Activated CD4-positive, alpha-beta T cell treated with anti-CD3 and anti-CD28 coated beads for 36 hours (primary cell): ENCODE measurements at regions of chr7 and their contacts with region 1.

Region 1: DNA sequence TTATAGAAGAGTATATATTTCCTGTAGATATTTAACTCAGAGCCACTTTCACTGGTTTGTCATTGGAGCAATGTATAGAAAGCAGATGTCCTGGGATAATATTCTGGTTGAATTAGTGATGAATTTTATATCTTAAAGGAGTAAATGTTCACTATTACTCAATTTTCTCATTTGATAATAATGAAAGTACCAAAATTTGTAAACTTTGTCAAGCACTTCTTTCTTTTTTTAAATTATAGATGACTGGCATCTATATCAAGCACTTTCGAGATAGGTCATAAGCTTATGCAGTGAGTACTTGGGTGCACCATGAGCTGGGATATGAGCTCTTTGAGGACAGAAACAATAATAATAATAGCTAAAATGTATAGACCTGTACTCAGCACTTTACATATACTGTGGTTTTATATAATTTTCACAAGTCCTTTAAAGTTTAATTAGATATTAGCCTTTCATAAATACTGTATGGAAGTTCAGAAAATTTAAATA is 11.3 kb downstream of the RSBN1L start:
- DNase-seq: no peak
- ATAC-seq: peak; percentile 84
- H3K4me3 Mint-ChIP-seq: no peak overlapping the region
- H3K27ac Mint-ChIP-seq: no peak overlapping the region
- H3K4me1 Mint-ChIP-seq: peaks cover 49% of the 10 kb centered on the region
- H3K27me3 Mint-ChIP-seq: no peaks in the 10 kb centered on the region

Region 2: GRCh38 chr7:77696198-77697028 is 11.1 kb before region 1 on chr7 and contains the start of gene RSBN1L:
- CTCF ChIA-PET with region 1: interaction called, 14 read pairs
- POLR2A ChIA-PET with region 1: no interaction called
- intact Hi-C with region 1: no loop called
- DNase-seq: peak; percentile 99
- ATAC-seq: peak; percentile 98
- H3K4me3 Mint-ChIP-seq: peak within 1 kb of the TSS; percentile 99
- H3K27ac Mint-ChIP-seq: peak within 1 kb of the TSS; percentile 95
- H3K4me1 Mint-ChIP-seq: peaks cover 45% of the 10 kb centered on the region
- H3K27me3 Mint-ChIP-seq: no peaks in the 10 kb centered on the region
- total RNA-seq, gene RSBN1L: 21.0 to 26.3 TPM